PC-9 (cell line): ENCODE measurements at regions of chr3 and their contacts with region 1.

Region 1: GRCh38 chr3:120198305-120198878 is 86.6 kb downstream of the GPR156 start:
- DNase-seq: no peak
- H3K4me3 ChIP-seq: no peak overlapping the region
- H3K27ac ChIP-seq: no peak overlapping the region
- H3K4me1 ChIP-seq: peaks cover 28% of the 10 kb centered on the region
- H3K27me3 ChIP-seq: no peaks in the 10 kb centered on the region
- CTCF ChIP-seq: peak; percentile 50; the same call in 1 of the 2 replicates

Region 2: DNA sequence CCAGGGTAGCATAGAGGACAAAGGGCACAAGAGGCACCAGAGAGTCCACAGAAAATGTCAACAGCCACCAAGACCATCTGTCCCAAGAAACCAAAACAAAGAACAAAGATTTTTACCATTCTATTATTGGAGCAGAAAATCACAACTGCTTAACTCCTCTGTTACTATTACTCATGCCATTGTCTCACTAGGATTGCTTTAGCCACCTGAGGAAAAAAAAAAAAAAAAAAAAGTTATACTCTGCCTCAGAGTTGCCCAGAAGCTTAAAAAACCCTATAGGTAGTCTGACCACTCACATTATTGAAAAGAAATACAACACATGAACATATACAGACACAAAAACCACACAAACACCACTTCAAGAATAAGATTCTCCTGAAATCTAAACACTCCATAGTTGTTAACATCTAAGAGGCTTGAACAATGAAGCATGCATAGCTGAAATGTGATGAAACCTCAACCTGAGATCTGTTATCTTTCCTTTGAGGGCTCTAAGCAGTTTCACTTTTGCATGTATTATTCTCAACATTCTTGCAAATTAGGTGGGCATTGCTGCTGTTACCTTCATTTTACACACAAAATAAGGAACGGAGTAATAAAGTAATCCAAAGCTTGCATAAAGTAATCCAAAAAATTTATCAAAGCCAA is 1249.2 kb before region 1 on chr3:
- CTCF ChIA-PET with region 1: interaction called, 14 read pairs
- POLR2A ChIA-PET with region 1: no interaction called
- intact Hi-C with region 1: no loop called
- DNase-seq: no peak
- H3K4me3 ChIP-seq: no peak overlapping the region
- H3K27ac ChIP-seq: no peak overlapping the region
- H3K4me1 ChIP-seq: no peaks in the 10 kb centered on the region
- H3K27me3 ChIP-seq: no peaks in the 10 kb centered on the region
- CTCF ChIP-seq: no peak

Region 3: DNA sequence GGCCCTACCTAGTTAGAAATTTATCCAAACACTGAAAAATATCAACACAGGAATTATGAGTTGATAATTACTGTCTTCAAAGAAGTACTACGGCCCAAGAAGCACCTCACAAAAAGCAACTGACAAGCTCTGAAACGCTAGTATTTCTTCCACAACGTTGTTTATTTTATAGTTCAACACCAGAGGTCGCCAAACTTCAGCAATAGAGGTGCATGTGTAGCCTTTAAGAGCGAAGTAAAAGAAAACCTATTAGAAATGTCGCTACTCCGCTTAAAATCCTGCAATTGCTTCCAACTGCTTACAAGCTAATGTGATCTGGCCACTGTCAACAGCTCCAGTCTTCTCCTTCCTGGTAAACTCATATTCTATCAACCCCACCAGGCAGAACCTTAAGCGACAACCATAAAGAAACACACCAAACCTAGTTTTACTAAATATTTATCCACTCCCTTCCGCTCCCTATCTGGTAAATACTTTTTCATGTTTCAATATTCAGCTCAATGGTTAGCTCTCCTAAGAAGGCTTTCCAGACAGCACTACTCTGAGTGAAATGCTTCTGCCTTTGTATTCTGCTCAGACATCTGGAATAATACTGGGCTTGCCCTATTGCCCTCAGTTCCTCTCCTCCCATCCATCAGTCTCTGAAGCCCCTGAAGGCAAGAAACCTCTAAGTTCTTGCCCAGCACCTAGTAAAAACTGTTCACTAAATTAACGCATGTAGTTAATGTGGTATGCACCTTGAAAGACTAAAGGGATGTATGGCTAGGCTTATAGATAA is 306.3 kb before region 1 on chr3:
- CTCF ChIA-PET with region 1: no interaction called
- POLR2A ChIA-PET with region 1: no interaction called
- intact Hi-C with region 1: loop called (anchors 5 kb)
- DNase-seq: peak in 1 of 2 experiments; percentile 10
- H3K4me3 ChIP-seq: no peak overlapping the region
- H3K27ac ChIP-seq: no peak overlapping the region
- H3K4me1 ChIP-seq: no peaks in the 10 kb centered on the region
- H3K27me3 ChIP-seq: no peaks in the 10 kb centered on the region
- CTCF ChIP-seq: peak; percentile 70